ENCODE measurements at regions of chr3 and their contacts with region 1.

Region 1: DNA sequence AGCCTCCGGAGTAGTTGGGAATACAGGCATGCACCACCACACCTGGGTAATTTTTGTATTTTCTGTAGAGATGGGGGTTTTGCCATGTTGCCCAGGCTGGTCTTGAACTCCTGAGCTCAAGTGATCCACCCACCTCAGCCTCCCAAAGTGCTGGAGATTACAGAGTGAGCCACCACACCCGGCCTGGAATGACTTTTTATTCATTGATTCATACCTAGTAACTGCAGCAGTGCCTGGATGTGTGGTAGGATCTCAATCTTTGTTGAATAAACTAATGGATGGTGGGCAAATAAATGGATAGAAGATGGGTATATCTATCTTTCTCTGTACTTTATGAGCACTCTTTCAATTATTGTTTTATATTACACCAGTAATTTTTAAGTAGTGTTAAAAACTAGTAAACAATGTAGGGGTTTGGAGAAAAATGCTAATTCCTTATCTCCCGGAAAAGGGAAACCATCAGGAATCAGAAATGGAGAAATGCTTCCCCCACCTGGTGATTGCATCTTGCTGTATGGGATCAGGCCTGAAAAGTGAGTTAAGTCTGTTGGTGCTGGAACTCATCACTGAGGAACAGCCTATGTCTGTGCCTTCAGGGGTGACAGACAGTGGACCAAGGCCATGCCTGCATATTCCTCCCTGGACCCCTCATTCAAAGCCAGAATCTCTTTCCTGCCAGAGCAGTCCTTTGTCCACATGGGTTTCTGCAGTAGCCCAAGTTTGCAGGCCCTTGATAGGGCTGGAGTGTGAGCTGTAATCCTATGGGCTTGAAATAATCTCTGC is 161.0 kb upstream of the CTDSPL start:
- DNase-seq: no peak
- ATAC-seq: peak; percentile 31
- H3K4me3 ChIP-seq: no peak overlapping the region
- H3K27ac ChIP-seq: no peak overlapping the region
- H3K4me1 ChIP-seq: no peaks in the 10 kb centered on the region
- H3K27me3 ChIP-seq: no peaks in the 10 kb centered on the region

Region 2: DNA sequence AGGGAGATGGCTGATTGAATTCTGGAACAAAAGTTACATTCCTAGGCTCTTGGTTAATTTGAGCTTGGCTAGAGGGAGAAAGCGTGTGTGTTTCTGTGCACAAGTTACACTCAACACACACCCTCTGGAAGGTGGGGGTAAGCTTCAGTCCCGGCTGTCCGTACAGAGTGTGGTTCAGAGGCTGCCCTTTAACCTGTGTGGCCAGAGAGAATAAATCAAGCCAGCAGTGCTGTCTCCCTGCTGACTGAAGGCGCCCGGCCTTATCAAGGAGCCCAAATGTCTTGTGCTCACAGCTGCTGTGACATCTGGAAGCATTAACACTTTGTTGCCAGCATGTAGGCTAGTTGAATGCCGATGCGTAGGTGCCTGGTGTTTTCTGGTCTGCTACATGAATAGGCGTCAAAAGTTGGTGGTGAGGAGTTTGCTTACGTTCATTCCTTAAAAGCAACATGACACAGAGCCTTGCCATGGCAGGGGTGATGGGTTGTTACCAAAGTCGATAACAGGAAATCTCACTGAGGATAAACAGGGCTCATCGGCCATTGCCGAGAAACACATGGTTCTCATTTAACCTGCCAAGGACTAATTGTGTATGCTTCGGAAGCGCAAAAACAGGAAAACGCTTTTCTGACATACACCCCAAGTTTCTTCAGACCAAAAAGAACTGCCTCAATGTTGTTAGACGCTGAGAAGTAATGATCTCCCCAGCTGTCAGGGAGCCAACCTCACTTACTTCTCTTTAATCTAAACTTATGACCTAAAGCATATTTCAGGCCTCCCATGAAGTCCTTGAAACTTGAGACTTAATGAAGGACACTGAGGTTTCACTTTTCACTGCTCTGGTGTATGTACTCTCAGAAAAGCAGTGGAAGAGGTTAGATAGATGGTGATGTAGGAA is 65.2 kb after region 1 on chr3:
- intact Hi-C with region 1: loop called in 1 of 2 experiments (anchors 10 kb)
- DNase-seq: peak in 1 of 2 donors; percentile 59
- ATAC-seq: peak; percentile 87
- H3K4me3 ChIP-seq: no peak overlapping the region
- H3K27ac ChIP-seq: peak overlapping the region; percentile 31 to 94
- H3K4me1 ChIP-seq: peaks cover 0 to 11% of the 10 kb centered on the region in 2 donors
- H3K27me3 ChIP-seq: no peaks in the 10 kb centered on the region